Vagina (tissue), 2 donors: ENCODE measurements at regions of chr9 and their contacts with region 1.

Region 1: GRCh38 chr9:124771021-124771866 is at the start of gene NR6A1:
- DNase-seq: no peak
- H3K4me3 ChIP-seq: peak within 1 kb of the TSS; percentile 57 to 79
- H3K27ac ChIP-seq: peak within 1 kb of the TSS; percentile 73
- H3K4me1 ChIP-seq: peaks cover 26% of the 10 kb centered on the region
- H3K27me3 ChIP-seq: no peaks in the 10 kb centered on the region
- CTCF ChIP-seq: peak in 2 of 3 experiments; percentile 8 to 24
- POLR2A ChIP-seq: no peak
- total RNA-seq, gene NR6A1: 1.2 TPM

Region 2: DNA sequence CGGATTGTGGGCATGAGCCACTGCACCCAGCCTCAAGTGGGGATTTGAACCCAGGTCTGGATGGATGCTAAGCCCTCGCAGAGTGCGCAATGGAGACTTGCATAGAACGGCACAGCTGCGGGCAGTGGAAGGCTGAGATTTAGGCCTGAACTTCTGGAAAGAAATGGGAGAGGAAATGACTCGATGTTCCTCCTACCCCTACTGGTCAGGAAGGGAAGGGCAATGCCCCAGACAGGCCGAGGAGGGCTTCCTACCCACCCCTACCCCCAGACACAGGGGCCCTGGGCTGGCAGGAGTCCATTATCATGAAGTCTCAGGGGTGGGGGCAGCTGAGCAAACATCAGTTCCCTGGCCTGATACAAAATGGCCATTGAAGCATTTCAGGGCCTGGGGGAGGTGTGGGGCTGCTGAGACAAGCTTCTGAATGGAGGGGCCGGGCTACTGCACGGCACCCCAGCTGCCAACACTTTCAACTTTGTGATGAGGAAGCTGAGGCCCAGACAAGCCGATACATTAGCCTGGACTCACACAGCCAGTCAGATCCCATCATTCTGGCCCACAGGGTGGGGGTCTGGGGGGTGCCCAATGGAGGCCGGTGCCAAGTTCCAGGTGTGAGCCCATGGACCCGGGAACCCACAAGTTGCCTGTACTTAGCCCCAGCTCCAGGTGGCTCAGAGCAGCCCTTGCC is 68.5 kb after region 1 on chr9:
- intact Hi-C with region 1: loop called (anchors 5 kb)
- DNase-seq: no peak
- H3K4me3 ChIP-seq: no peak overlapping the region
- H3K27ac ChIP-seq: no peak overlapping the region
- H3K4me1 ChIP-seq: peaks cover 8% of the 10 kb centered on the region
- H3K27me3 ChIP-seq: no peaks in the 10 kb centered on the region
- CTCF ChIP-seq: peak in 1 of 3 experiments; percentile 20
- POLR2A ChIP-seq: no peak

Region 3: DNA sequence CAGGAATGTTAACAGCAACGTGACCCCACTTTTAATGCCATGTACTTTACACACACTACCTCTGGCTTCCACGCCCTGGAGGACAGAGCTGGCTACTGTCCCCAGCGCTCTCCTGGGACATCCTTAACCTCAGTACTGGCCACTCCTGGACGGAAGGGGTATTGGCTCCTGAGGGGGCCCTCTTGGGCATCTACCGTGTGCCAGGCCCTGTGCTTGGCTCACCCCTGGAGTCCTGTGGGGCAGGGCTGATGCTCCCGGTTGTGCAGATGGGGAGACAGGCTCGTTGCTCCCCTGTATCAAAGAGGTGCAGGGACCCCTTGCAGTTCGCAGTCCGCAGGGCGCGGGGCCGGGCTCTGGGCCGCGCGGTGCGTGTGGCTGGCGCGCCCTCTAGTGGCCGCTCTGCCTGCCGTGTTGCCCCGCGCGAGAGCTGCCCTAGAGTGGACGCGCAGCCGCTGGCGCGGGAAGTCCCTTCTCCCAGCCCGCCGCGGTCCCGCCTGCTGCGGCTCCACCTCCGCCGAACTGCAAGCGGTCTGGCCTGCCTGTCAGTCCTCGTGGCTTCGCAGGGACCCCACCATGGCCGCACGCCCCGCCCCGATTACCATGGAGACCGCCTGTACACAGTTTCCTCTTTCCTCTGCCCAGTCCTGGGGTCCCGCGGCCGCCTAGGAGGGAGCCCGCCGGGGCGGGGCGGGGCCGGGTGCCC is 81.7 kb after region 1 on chr9 and contains the start of gene WDR38:
- intact Hi-C with region 1: loop called (anchors 2 kb)
- DNase-seq: peak in 1 of 2 donors; percentile 90
- H3K4me3 ChIP-seq: peak within 1 kb of the TSS; percentile 44 to 47
- H3K27ac ChIP-seq: peak within 1 kb of the TSS; percentile 68
- H3K4me1 ChIP-seq: peaks cover 20% of the 10 kb centered on the region
- H3K27me3 ChIP-seq: no peaks in the 10 kb centered on the region
- CTCF ChIP-seq: peak; percentile 95 to 100 (median 99)
- POLR2A ChIP-seq: no peak
- total RNA-seq, gene WDR38: not detected

Region 4: DNA sequence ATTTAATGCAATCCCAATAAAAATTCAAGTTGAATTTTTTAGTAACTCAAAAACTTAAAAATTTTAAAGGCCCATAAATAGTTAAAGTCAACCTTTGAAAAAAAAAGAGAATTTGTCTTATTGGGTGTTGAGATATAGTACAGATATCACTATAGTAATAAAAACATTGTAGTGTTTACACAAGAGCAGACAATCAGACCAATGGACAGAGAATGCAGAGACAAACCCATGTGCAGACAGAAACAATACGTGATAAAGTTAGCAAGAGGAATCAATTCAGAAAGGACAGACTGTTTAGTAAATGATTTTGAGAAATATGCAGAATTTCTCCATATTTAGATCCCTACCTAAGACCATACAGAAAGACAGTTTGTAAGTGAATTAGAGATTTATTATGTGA is 135.7 kb after region 1 on chr9:
- intact Hi-C with region 1: no loop called
- DNase-seq: no peak
- H3K4me3 ChIP-seq: no peak overlapping the region
- H3K27ac ChIP-seq: no peak overlapping the region
- H3K4me1 ChIP-seq: no peaks in the 10 kb centered on the region
- H3K27me3 ChIP-seq: no peaks in the 10 kb centered on the region
- CTCF ChIP-seq: no peak
- POLR2A ChIP-seq: no peak

Region 5: DNA sequence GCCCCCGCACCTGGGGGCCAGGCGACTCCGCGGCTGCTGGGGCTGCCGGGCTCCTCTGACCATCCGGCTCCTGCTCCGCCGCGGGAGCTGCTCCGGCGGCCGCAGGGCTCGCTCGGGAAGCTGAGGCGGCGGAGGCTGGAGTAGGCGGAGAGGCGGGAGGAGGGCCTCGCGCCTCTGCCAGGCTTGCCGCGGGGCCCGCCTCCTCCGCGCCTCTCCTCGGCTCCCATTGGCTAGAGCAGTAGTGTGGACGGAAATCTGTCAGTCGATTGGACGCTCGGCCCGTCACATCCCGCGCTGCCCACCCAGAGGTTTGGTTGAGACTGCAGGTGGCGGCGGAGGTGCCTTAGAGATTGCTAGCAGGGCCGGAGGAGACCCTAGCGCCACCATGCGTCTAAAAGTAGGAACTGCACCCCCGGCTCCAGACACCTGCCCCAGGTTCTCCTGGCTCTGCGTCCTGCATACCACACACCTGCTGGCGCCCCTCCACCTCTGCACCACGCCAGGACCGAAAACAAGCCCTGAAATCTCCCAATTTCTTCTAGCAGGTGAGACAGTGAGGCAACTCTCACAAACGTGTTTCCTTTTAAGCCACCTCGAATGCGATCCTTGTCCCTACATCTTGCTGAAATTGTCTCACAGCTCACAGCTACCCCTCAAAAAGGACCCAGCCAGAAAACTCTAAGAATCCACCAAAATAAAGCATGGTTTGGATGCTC is 372.3 kb after region 1 on chr9 and contains the start of gene SCAI:
- intact Hi-C with region 1: loop called (anchors 10 kb)
- DNase-seq: peak; percentile 96 to 99
- H3K4me3 ChIP-seq: peak within 1 kb of the TSS; percentile 72 to 87
- H3K27ac ChIP-seq: peak within 1 kb of the TSS; percentile 74
- H3K4me1 ChIP-seq: peaks cover 14% of the 10 kb centered on the region
- H3K27me3 ChIP-seq: no peaks in the 10 kb centered on the region
- CTCF ChIP-seq: peak; percentile 97 to 98 (median 98)
- POLR2A ChIP-seq: no peak
- total RNA-seq, gene SCAI: 15.7 TPM